Stomach (tissue), 19 donors: ENCODE measurements at regions of chr1 and their contacts with region 1.

Region 1: DNA sequence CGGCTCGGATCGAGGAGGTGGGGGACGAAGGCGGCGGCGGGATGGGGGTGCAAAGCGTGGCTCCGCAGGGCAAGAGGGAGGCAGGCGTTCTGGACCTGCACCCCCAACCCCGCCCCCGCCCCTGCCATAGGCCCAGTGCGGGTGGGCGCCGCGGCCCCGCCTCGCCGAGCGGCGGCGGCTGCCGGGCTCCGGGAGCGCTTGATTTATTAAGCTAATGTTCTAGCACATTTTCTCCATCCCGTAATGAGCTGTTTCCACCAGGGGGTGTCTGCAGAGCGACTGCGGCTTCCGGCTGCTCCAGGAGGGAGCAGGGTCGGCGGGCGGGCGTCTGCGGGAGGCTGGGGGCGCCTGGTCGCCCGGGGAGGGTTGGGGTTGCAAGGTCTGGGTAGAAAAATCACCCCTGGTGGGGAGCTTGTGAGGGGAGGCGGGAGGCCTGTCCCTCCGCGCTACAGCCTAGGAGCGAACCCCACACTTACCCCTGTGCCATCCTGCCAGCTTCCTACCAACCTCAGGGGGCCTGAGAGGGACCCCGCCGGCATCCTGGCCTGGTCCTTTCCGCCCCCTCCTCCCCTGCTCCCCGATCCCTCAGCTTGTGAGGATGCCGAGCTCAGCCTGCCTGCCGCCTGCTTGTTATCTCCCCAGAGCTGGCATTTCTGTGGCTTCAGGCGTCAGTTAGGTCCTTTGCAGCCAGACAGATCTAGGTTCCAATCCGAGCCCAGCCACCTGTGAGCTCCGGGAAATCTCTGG is 48.5 kb upstream of the ACOT11 start:
- DNase-seq: peak in 1 of 2 donors; percentile 86
- H3K4me3 ChIP-seq: peak overlapping the region; percentile 40 to 55 (median 43)
- H3K27ac ChIP-seq: peak overlapping the region in 1 of 5 donors; percentile 37
- H3K4me1 ChIP-seq: peaks cover 13 to 19% (median 16%) of the 10 kb centered on the region in 4 donors
- H3K27me3 ChIP-seq: peaks cover 0 to 34% (median 20%) of the 10 kb centered on the region in 3 donors
- CTCF ChIP-seq: peak in 4 of 7 experiments; percentile 10 to 49 (median 30)
- EP300 ChIP-seq: no peak
- POLR2A ChIP-seq: no peak

Region 2: GRCh38 chr1:54121482-54122134 is 377.9 kb before region 1 on chr1:
- intact Hi-C with region 1: loop called (anchors 10 kb)
- DNase-seq: peak; percentile 84 to 94
- H3K4me3 ChIP-seq: peak overlapping the region; percentile 22 to 42 (median 34)
- H3K27ac ChIP-seq: peak overlapping the region in 1 of 5 donors; percentile 27
- H3K4me1 ChIP-seq: peaks cover 17 to 47% (median 34%) of the 10 kb centered on the region in 4 donors
- H3K27me3 ChIP-seq: peaks cover 0 to 8% (median 0%) of the 10 kb centered on the region in 3 donors
- CTCF ChIP-seq: peak in 5 of 7 experiments; percentile 35 to 75 (median 67)
- EP300 ChIP-seq: no peak
- POLR2A ChIP-seq: no peak

Region 3: DNA sequence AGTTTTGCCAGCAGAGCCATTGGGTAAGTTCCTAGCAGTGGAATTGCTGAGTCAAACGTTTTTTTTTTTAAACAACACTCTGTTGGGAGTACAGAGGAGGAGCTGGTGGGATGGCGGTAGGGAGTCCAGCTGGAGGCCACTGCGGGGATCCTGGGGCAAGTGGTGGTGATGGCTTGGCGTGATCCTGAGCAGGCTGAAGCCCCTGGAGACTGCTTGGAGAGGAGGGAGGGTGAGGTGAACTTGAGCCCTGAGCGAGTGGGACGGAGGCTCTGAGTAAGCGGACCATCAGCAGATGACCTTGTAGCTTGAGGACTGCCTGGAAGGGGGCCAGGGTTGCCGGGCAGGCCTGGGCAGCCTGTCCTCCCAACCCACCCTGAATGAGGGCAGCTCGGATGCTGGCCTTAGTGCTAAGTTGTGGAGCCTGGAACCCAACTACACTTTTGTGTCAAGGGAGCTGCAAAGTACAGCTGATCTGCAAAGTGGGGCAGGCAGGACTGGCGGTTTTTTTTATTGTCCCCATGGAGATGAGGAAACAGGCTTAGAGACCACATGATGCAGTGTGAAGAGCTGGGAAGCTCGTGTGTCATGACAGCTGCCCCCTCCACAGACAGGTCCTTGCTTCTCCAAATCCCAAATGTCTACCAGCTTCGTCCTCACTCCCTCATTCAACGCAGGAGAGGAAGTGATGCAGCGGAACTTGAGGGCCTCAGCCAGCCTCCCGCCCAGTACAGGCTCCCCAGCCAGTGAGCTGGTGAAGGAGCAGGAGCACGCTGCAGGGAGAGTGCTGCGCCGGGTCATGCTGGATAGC is 279.3 kb before region 1 on chr1:
- intact Hi-C with region 1: no loop called
- DNase-seq: peak in 1 of 2 donors; percentile 60
- H3K4me3 ChIP-seq: no peak overlapping the region
- H3K27ac ChIP-seq: peak overlapping the region in 4 of 5 donors; percentile 70 to 87 (median 78)
- H3K4me1 ChIP-seq: peaks cover 26 to 41% (median 32%) of the 10 kb centered on the region in 4 donors
- H3K27me3 ChIP-seq: no peaks in the 10 kb centered on the region
- CTCF ChIP-seq: no peak
- EP300 ChIP-seq: no peak
- POLR2A ChIP-seq: no peak

Region 4: DNA sequence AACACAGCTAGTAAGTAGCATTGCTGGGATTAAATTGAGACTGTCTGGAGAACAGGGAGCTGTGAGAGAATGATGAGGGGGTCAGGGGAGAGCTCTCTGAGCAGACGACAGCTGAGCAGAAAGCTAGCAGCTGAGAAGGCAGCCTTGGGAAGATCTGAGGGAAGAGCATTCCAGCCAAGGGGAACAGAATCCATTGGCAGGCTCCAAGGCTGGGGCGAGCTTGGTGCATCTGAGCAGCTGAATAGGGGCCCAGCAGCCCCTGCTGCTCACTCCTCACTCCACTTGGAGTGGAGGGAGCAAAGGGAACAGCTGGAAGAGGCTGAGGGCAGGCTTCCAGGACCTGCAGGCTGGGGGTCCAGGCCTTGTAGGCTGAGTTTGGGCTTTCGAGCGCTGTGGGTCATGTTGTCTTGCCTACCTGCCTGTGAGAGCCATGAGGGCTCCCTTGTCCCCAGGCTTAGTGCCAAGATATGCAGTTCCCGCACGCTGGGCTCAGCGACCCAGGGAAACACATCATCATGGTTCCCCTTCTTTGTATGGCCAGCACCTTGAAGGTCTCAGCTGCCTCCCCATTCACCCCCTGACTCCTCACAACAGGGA is 59.0 kb after region 1 on chr1:
- intact Hi-C with region 1: no loop called
- DNase-seq: no peak
- H3K4me3 ChIP-seq: no peak overlapping the region
- H3K27ac ChIP-seq: peak overlapping the region in 3 of 5 donors; percentile 15 to 62 (median 24)
- H3K4me1 ChIP-seq: peaks cover 0 to 22% (median 12%) of the 10 kb centered on the region in 4 donors
- H3K27me3 ChIP-seq: no peaks in the 10 kb centered on the region
- CTCF ChIP-seq: no peak
- EP300 ChIP-seq: no peak
- POLR2A ChIP-seq: no peak